Aorta (tissue), 5 donors: ENCODE measurements at regions of chr17 and their contacts with region 1.

Region 1: GRCh38 chr17:73645050-73645978 is 1.1 kb upstream of the SDK2 start:
- DNase-seq: peak; percentile 63 to 85
- ATAC-seq: peak; percentile 71
- H3K4me3 ChIP-seq: peak overlapping the region; percentile 48 to 74
- H3K27ac ChIP-seq: peak overlapping the region in 1 of 2 donors; percentile 1
- H3K4me1 ChIP-seq: peaks cover 0 to 4% of the 10 kb centered on the region in 2 donors
- H3K27me3 ChIP-seq: no peaks in the 10 kb centered on the region

Region 2: DNA sequence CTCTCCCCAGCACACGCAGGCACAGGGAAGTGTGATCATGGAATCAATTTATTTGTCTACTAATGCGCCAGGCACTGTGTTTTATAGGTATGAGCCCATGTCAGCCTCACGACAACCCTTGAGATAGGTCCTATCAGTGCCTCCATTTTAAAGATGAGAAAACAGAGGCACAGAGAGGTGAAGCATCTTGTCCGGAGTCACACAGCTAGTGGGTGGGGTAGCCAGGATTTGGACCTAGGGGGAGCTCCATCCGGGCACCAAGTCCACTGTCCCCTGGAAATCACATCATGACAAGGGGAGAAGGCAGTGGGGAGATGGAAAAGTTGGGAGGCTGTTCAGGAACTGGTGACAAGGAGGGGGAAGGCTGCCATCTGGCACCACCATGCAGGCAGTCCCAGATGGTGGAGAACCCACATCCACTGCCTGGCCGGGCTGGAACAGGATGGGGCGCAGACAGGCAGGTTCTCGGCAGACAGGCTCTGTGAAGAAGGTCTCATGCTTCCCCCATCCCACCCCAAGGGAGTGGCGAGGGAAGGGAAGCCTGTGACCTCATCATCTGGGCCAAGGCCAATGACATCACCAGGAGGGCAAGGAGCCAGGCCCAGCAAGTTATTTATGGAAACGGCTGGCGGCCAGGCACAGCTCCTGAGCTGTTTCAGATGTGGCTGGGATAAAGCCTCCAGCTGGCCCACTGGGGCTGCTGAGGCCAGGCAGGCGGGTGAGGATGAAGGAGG is 125.0 kb after region 1 on chr17:
- intact Hi-C with region 1: loop called (anchors 5 to 10 kb)
- DNase-seq: peak; percentile 87 to 95
- ATAC-seq: peak; percentile 85
- H3K4me3 ChIP-seq: no peak overlapping the region
- H3K27ac ChIP-seq: peak overlapping the region in 1 of 2 donors; percentile 23
- H3K4me1 ChIP-seq: peaks cover 0 to 2% of the 10 kb centered on the region in 2 donors
- H3K27me3 ChIP-seq: no peaks in the 10 kb centered on the region

Region 3: GRCh38 chr17:74203439-74204240 is 558.3 kb after region 1 on chr17 and contains the start of gene RPL38:
- intact Hi-C with region 1: loop called in 1 of 2 experiments (anchors 10 kb)
- DNase-seq: peak; percentile 97 to 98
- ATAC-seq: peak; percentile 97
- H3K4me3 ChIP-seq: peak within 1 kb of the TSS; percentile 90 to 97
- H3K27ac ChIP-seq: peak within 1 kb of the TSS in 1 of 2 donors; percentile 81
- H3K4me1 ChIP-seq: no peaks in the 10 kb centered on the region
- H3K27me3 ChIP-seq: no peaks in the 10 kb centered on the region
- total RNA-seq, gene RPL38: 597 to 622 TPM